CD4-positive, alpha-beta T cell (primary cell): ENCODE measurements at regions of chr4 and their contacts with region 1.

Region 1: GRCh38 chr4:147683717-147684700 is at the start of gene PRMT9:
- DNase-seq: peak; percentile 69 to 93 (median 84)
- ATAC-seq: peak; percentile 95
- H3K4me3 ChIP-seq: peak within 1 kb of the TSS; percentile 91
- H3K4me3 Mint-ChIP-seq: peak within 1 kb of the TSS; percentile 98
- H3K27ac ChIP-seq: peak within 1 kb of the TSS; percentile 79 to 93
- H3K27ac Mint-ChIP-seq: peak within 1 kb of the TSS; percentile 100
- H3K4me1 ChIP-seq: peaks cover 12% of the 10 kb centered on the region
- H3K4me1 Mint-ChIP-seq: peaks cover 42% of the 10 kb centered on the region
- H3K27me3 ChIP-seq: no peaks in the 10 kb centered on the region
- H3K27me3 Mint-ChIP-seq: peaks cover 15% of the 10 kb centered on the region
- CTCF ChIP-seq: no peak
- total RNA-seq, gene PRMT9: 21.0 to 21.1 TPM

Region 2: GRCh38 chr4:147617173-147617840 is 66.7 kb before region 1 on chr4 and contains the start of gene TMEM184C:
- CTCF ChIA-PET with region 1: interaction called, 3 read pairs
- POLR2A ChIA-PET with region 1: interaction called, 87 read pairs
- intact Hi-C with region 1: loop called (anchors 1 to 2 kb)
- DNase-seq: peak; percentile 96 to 99 (median 98)
- ATAC-seq: peak; percentile 95
- H3K4me3 ChIP-seq: peak within 1 kb of the TSS; percentile 78
- H3K4me3 Mint-ChIP-seq: peak within 1 kb of the TSS; percentile 89
- H3K27ac ChIP-seq: peak within 1 kb of the TSS; percentile 80 to 90
- H3K27ac Mint-ChIP-seq: peak within 1 kb of the TSS; percentile 92
- H3K4me1 ChIP-seq: peaks cover 29% of the 10 kb centered on the region
- H3K4me1 Mint-ChIP-seq: peaks cover 38% of the 10 kb centered on the region
- H3K27me3 ChIP-seq: no peaks in the 10 kb centered on the region
- H3K27me3 Mint-ChIP-seq: no peaks in the 10 kb centered on the region
- CTCF ChIP-seq: no peak
- total RNA-seq, gene TMEM184C: 10.0 to 10.1 TPM